Gastrocnemius medialis (tissue), 4 donors: ENCODE measurements at regions of chr9 and their contacts with region 1.

Region 1: DNA sequence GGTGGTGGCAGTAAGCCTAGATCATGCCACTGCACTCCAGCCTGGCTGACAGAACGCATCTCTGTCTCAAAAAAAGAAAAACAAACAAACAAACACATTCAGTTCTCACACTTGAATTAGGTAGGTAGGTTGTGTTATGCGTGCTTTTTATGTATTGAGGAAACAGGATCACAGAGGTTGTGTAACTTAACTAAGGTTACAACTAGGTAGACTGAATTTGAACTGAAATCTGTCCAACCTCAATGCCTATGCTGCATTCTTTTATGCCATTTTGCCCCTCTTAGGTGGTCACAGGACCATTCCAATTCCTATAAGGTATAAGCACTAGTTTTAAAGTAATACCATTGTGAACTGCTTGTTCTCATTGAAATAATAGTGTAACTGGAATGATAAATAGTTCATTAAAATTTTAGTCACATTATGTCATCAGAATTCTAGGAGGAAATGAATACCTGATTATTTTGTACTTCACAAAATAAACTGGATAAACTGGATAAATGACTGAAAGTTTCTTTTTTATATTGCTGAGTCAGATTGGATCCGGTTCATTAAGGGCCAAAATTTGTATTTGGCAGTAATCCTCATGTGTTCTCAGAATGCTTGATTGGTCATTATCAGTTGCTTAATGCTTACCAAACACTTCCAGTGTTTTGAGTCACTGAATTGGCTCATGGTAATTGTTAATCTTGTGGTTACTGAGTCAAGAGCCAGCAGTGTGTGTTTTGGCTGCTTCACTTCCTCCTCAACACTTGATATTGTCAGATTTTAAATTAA is 7.1 kb downstream of the UBAP1 start:
- DNase-seq: peak; percentile 46 to 69
- ATAC-seq: peak; percentile 95
- H3K4me3 ChIP-seq: peak overlapping the region in 2 of 4 donors; percentile 6 to 17
- H3K27ac ChIP-seq: peak overlapping the region; percentile 71 to 99 (median 90)
- H3K4me1 ChIP-seq: peaks cover 49 to 50% of the 10 kb centered on the region in 2 donors
- H3K27me3 ChIP-seq: no peaks in the 10 kb centered on the region
- CTCF ChIP-seq: no peak
- POLR2A ChIP-seq: peak in 1 of 2 donors; percentile 26

Region 2: GRCh38 chr9:33884856-33885701 is 300.9 kb before region 1 on chr9:
- in situ Hi-C with region 1: no loop called
- intact Hi-C with region 1: loop called (anchors 10 kb)
- DNase-seq: no peak
- ATAC-seq: no peak
- H3K4me3 ChIP-seq: no peak overlapping the region
- H3K27ac ChIP-seq: peak overlapping the region in 1 of 4 donors; percentile 5
- H3K4me1 ChIP-seq: peaks cover 44 to 62% of the 10 kb centered on the region in 2 donors
- H3K27me3 ChIP-seq: no peaks in the 10 kb centered on the region
- CTCF ChIP-seq: no peak
- POLR2A ChIP-seq: no peak

Region 3: DNA sequence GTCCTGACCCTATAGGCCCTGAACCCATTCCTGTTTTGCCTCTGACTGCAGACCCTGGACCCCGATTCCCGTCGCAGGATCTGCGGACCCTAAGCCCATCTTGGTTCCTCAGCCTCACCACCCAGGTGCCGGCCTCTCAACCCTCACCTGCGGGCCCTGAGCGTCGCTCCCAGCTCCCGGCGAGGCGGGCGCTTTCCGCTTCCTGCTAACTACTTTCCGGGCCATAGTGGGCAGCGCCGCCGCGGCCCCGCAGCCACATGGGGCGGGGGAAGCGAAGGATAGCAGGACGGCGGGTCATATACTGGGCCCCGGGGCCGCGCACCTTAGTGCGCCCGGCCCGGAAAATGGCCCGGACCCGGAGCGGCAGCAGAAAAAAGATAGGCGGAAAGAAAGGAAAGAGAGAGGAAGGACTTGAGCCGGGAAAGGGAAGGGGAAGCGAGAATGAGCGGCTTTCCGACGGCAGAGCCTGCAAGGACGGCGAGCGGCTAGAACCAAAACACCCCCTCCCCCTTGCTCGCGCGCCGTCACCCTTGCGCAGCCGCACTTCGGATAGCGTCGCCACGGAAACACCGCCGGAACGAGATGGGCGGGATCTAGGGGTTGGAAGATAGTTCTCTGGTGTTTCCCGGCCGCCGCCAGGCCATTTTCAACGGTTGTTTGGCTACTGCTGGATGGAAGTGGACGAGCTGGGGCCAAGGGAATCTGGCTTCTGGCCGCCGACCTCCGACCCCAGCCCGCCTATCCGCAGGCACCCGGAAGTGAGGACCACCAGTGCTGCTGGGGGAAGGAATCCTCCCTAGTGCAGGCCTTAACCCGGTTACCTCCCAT is 59.5 kb before region 1 on chr9 and contains the start of gene DCAF12:
- in situ Hi-C with region 1: loop called in 1 of 4 experiments (anchors 10 kb)
- intact Hi-C with region 1: no loop called
- DNase-seq: peak; percentile 81 to 86
- ATAC-seq: peak; percentile 96 to 98
- H3K4me3 ChIP-seq: peak within 1 kb of the TSS; percentile 69 to 99 (median 84)
- H3K27ac ChIP-seq: peak within 1 kb of the TSS; percentile 84 to 98 (median 90)
- H3K4me1 ChIP-seq: peaks cover 30 to 31% of the 10 kb centered on the region in 2 donors
- H3K27me3 ChIP-seq: no peaks in the 10 kb centered on the region
- CTCF ChIP-seq: peak in 1 of 5 experiments; percentile 23
- POLR2A ChIP-seq: peak; percentile 66 to 80
- total RNA-seq, gene DCAF12: 19.4 to 33.7 (median 26.7) TPM

Region 4: DNA sequence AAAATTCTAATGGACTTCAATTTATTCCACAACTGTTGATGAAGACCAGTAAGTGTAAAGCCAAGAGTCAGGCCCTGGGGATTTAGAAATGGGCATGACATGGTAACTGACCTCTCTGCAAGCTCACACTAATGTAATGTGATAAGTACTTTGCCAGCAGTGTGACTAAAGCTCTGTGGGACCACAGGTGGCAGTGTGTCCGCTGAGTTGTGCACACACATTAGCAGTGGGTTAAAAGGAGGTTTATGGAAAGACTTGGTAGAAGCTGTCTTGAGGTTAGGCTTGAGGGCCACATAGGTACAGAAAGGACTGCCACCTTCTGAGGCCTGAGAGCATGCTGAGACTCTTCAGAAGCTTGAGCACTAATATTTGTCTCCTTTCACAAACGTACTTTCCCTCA is 60.5 kb after region 1 on chr9:
- in situ Hi-C with region 1: loop called in 2 of 4 experiments (anchors 5 kb)
- intact Hi-C with region 1: loop called (anchors 1 kb)
- DNase-seq: peak; percentile 70 to 71
- ATAC-seq: peak; percentile 80 to 90
- H3K4me3 ChIP-seq: no peak overlapping the region
- H3K27ac ChIP-seq: peak overlapping the region; percentile 82 to 98 (median 88)
- H3K4me1 ChIP-seq: peaks cover 49 to 52% of the 10 kb centered on the region in 2 donors
- H3K27me3 ChIP-seq: no peaks in the 10 kb centered on the region
- CTCF ChIP-seq: peak in 1 of 5 experiments; percentile 22
- POLR2A ChIP-seq: peak in 1 of 2 donors; percentile 31

Region 5: DNA sequence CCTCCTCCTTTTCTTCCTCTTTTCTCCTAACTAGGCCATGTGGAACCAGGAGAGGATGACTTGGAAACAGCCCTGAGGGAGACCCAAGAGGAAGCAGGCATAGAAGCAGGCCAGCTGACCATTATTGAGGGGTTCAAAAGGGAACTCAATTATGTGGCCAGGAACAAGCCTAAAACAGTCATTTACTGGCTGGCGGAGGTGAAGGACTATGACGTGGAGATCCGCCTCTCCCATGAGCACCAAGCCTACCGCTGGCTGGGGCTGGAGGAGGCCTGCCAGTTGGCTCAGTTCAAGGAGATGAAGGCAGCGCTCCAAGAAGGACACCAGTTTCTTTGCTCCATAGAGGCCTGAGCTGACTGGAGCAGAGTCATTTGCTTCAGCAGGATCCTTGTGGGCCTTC is 157.1 kb after region 1 on chr9:
- in situ Hi-C with region 1: no loop called
- intact Hi-C with region 1: no loop called
- DNase-seq: peak; percentile 48 to 90
- ATAC-seq: peak; percentile 69 to 81
- H3K4me3 ChIP-seq: peak overlapping the region in 1 of 4 donors; percentile 6
- H3K27ac ChIP-seq: peak overlapping the region; percentile 71 to 93 (median 80)
- H3K4me1 ChIP-seq: peaks cover 45 to 53% of the 10 kb centered on the region in 2 donors
- H3K27me3 ChIP-seq: no peaks in the 10 kb centered on the region
- CTCF ChIP-seq: no peak
- POLR2A ChIP-seq: no peak